HepG2 (cell line): ENCODE measurements at regions of chr6 and their contacts with region 1.

Region 1: DNA sequence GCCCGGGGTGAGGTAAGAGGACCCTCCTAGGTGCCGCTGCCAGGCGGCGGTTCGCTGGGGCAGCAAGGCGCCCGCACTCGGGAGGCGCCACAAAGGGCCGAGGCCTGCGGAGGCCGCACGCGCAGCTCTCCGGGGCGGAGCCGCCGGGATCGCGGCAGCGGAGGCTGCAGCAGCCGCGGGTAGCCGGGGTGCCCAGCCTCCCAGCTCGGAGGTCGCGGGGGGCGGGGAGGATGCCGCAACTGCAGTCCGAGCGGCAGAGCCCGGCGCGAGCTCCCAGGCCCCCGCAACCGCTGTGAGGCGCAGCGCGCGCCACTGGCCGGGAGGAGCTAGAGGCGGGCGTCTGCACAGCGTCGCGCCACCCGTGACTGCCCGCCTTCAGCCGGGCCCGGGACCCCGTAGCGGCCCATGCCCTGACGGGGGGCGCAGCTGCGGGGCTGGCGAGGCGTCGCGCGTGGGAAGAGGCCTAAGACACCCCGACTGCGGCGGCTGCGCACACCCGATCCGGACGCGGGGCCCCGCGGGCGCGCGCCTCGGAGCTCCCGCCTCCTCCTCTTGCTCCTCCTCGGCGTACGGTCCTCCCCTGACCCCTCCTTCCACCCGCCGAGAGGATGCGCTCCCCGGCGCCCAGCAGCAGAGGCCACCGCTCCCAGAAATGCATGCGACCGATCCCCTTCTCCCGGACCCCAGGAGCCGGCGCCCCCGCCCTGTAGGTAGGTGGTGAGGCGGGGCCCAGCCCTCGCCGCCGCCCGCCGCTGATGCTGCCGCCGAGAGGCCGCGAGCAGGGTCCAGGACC is at the start of gene NCOA7:
- DNase-seq: peak; percentile 65
- ATAC-seq: peak; percentile 89
- H3K4me3 ChIP-seq: peak within 1 kb of the TSS; percentile 90 to 97 (median 94)
- H3K27ac ChIP-seq: peak within 1 kb of the TSS; percentile 88
- H3K4me1 ChIP-seq: peaks cover 42% of the 10 kb centered on the region
- H3K27me3 ChIP-seq: no peaks in the 10 kb centered on the region; a peak in 2 of 5 replicates
- CTCF ChIP-seq: peak; percentile 13
- EP300 ChIP-seq: no peak
- POLR2A ChIP-seq: peak; percentile 78 to 81
- RAD21 ChIP-seq: peak; percentile 79
- total RNA-seq, gene NCOA7: 13.6 and 24.3 TPM in 2 replicates

Region 2: GRCh38 chr6:125301435-125302391 is 488.8 kb before region 1 on chr6 and contains the start of gene HDDC2:
- CTCF ChIA-PET with region 1: no interaction called
- POLR2A ChIA-PET with region 1: interaction called, 16 read pairs
- in situ Hi-C with region 1: no loop called
- intact Hi-C with region 1: no loop called
- DNase-seq: peak; percentile 68
- ATAC-seq: peak; percentile 99
- H3K4me3 ChIP-seq: peak within 1 kb of the TSS; percentile 54 to 85 (median 84)
- H3K27ac ChIP-seq: peak within 1 kb of the TSS; percentile 67
- H3K4me1 ChIP-seq: peaks cover 32% of the 10 kb centered on the region
- H3K27me3 ChIP-seq: peaks cover 0 to 4% of the 10 kb centered on the region in 2 experiments; a peak in 1 of 5 replicates
- CTCF ChIP-seq: peak; percentile 7; the same call in 1 of the 2 replicates
- EP300 ChIP-seq: peak in 1 of 2 experiments; percentile 38; a peak in 2 of 4 replicates
- POLR2A ChIP-seq: peak; percentile 82 to 83
- RAD21 ChIP-seq: peak; percentile 71
- total RNA-seq, gene HDDC2: 78.7 and 90.7 TPM in 2 replicates

Region 3: DNA sequence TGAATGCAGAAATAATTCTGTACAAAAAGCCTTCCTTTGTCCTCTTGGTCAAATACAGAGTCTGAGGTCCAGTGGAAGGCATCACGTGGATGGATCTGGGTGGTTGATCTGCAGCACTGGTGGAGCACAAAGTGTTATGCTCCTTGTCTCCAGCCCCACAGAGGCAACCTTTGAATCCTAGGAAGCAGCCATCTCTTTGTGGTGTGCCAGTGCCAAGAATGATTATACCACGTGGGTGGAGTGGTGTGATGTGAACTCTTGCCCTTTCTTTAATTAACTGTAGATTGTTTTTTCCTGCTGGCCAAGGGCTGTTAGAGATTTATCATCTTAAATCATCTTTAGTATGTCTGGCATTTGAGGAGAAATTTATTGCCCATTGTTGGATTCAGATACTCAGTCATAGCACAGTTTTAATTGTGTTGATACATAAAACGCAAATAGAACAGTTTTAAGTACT is 31.3 kb after region 1 on chr6:
- CTCF ChIA-PET with region 1: no interaction called
- POLR2A ChIA-PET with region 1: interaction called, 4 read pairs
- in situ Hi-C with region 1: no loop called
- intact Hi-C with region 1: loop called (anchors 2 kb)
- DNase-seq: peak; percentile 92
- ATAC-seq: peak; percentile 98
- H3K4me3 ChIP-seq: no peak overlapping the region
- H3K27ac ChIP-seq: peak overlapping the region; percentile 69
- H3K4me1 ChIP-seq: peaks cover 57% of the 10 kb centered on the region
- H3K27me3 ChIP-seq: no peaks in the 10 kb centered on the region
- CTCF ChIP-seq: no peak
- EP300 ChIP-seq: peak in 1 of 2 experiments; percentile 70; a peak in 2 of 4 replicates
- POLR2A ChIP-seq: 0 out of 4 replicates have a peak, but pooled peaks of 1 of the 2 experiments have one; percentile 32
- RAD21 ChIP-seq: no peak; the same call in 1 of the 2 replicates

Region 4: DNA sequence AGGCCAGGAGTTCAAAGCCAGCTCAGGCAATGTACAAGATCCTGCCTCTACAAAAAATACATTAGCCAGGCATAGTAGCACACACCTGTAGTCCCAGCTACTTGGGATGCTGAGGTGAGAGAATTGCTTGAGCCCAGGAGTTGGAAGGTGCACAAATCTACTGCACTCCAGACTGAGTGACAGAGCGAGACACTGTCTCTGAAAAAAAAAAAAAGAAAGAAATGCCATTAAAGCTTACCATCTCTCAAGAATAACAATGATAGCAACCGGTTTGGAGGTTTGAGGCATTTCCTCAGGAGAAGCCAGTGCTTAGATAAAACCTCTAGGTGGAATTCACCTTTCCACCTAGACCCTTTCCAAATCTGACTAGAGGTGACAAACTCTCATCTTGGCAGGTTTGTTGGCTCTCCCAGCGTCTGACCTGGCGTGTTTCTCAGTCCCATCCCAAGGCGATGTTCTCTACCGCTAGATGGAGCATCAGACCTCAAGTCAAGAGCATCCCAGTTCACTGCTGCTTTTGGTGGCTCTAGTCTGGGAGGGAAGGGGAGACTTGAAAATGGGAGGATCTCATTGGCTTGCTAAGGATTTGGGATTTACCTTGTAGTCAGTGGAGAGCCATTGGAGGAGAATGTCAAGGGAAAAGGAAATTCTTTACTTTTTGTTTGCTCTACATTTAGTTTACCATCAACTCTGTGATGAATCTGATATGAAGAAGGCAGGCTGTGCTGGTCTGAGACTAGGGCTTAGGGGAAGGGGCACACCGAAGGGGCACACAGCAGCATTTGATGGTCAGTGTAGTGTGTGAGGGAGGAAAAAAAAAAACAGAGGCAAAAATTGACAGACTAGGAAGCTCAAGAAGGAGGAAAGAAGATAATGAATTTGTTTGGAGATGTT is 68.1 kb after region 1 on chr6:
- CTCF ChIA-PET with region 1: interaction called, 4 read pairs
- POLR2A ChIA-PET with region 1: no interaction called
- in situ Hi-C with region 1: no loop called
- intact Hi-C with region 1: loop called (anchors 2 kb)
- DNase-seq: peak; percentile 80
- ATAC-seq: peak; percentile 100
- H3K4me3 ChIP-seq: no peak overlapping the region
- H3K27ac ChIP-seq: no peak overlapping the region
- H3K4me1 ChIP-seq: no peaks in the 10 kb centered on the region
- H3K27me3 ChIP-seq: no peaks in the 10 kb centered on the region
- CTCF ChIP-seq: peak; percentile 97
- EP300 ChIP-seq: no peak
- POLR2A ChIP-seq: no peak
- RAD21 ChIP-seq: peak; percentile 89

Region 5: GRCh38 chr6:125974214-125974866 is 183.8 kb after region 1 on chr6:
- CTCF ChIA-PET with region 1: no interaction called
- POLR2A ChIA-PET with region 1: no interaction called
- in situ Hi-C with region 1: no loop called
- intact Hi-C with region 1: loop called (anchors 5 kb)
- DNase-seq: peak; percentile 56
- ATAC-seq: peak; percentile 69
- H3K4me3 ChIP-seq: no peak overlapping the region
- H3K27ac ChIP-seq: no peak overlapping the region
- H3K4me1 ChIP-seq: no peaks in the 10 kb centered on the region
- H3K27me3 ChIP-seq: no peaks in the 10 kb centered on the region
- CTCF ChIP-seq: peak; percentile 65
- EP300 ChIP-seq: no peak
- POLR2A ChIP-seq: no peak
- RAD21 ChIP-seq: no peak